T-cell (primary cell): ENCODE measurements at regions of chr6 and their contacts with region 1.

Region 1: DNA sequence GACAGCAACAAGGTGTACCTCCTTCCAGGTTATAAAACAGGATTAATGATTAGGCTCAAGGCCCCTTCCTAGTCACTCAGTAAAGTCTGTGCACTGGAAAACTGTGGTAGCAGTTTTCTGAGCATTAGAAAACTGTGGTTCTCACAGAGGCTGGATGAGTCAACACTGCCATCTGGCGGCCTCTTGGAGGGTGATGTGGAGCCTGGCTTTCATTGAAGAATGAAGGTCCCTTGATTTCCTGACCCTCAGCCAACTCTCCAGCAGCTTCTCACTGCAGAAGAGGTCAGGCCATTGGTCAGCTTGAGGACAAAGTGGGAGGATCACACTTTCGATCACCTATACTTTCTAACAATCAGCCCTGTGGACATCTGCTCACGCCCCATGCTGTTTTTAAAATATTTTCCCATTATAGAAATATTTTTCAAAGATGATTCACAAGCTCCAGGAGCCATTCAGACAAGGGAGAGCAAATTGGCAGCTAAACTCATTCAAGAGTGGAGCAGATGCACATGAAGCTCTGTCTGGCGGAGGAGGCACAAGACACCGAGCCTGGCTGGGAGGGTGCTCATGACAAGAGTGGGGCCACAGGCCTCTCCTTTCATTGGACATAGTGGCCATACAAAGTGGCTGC is 23.2 kb downstream of the PSMB1 start:
- DNase-seq: peak in 34 of 35 experiments; percentile 10 to 80 (median 58)
- ATAC-seq: peak; percentile 70 to 79 (median 74)
- H3K4me3 ChIP-seq: no peak overlapping the region
- H3K4me3 Mint-ChIP-seq: no peak overlapping the region
- H3K27ac ChIP-seq: no peak overlapping the region
- H3K27ac Mint-ChIP-seq: no peak overlapping the region
- H3K4me1 ChIP-seq: no peaks in the 10 kb centered on the region
- H3K4me1 Mint-ChIP-seq: peaks cover 0 to 2% (median 0%) of the 10 kb centered on the region in 3 donors
- H3K27me3 ChIP-seq: no peaks in the 10 kb centered on the region
- H3K27me3 Mint-ChIP-seq: peaks cover 0 to 4% of the 10 kb centered on the region in 2 donors

Region 2: DNA sequence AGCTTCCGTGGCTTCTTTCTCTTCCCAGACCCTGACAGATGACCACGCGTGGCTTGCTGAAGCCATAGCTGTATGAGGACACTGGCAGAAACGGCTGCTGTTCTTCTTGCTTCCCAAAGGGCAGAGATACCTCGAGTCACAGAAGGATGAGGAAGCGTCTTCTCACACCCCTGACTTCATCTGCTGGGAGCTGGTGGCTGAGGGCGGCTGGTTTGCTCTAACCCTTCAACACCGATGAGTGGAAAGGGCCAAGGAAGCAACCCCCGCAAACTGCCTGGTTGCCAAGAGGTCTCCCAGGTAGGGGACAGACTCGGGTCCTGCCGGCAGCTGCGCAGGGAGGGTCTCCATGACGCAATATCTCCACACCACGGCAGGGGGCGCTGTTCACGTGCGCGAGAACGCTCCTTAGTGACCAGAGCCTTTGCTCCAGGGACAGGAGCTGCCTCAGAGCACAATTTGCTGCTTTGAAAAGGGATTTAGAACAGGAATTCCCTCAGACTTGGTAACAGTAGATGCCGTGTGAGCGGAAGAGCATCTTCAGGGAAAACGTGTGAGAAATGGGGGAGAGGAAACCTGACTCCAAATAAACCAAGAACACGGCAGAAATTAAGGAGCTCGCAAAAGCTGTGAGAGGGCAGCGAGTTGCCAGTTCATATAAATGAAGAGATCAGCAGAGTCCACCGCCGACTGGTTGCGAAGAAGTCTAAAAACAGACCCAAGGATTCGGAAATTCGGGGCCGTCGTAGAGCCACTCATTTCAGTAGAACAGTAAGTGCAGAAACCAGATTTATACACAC is 698.3 kb before region 1 on chr6:
- CTCF ChIA-PET with region 1: interaction called, 7 to 10 read pairs
- POLR2A ChIA-PET with region 1: no interaction called
- DNase-seq: peak in 34 of 35 experiments; percentile 28 to 80 (median 56)
- ATAC-seq: peak; percentile 55 to 75 (median 60)
- H3K4me3 ChIP-seq: no peak overlapping the region
- H3K4me3 Mint-ChIP-seq: no peak overlapping the region
- H3K27ac ChIP-seq: no peak overlapping the region
- H3K27ac Mint-ChIP-seq: no peak overlapping the region
- H3K4me1 ChIP-seq: peaks cover 0 to 6% of the 10 kb centered on the region in 2 experiments
- H3K4me1 Mint-ChIP-seq: peaks cover 0 to 2% (median 0%) of the 10 kb centered on the region in 3 donors
- H3K27me3 ChIP-seq: peaks cover 0 to 36% of the 10 kb centered on the region in 2 experiments
- H3K27me3 Mint-ChIP-seq: peaks cover 33 to 54% of the 10 kb centered on the region in 2 donors

Region 3: DNA sequence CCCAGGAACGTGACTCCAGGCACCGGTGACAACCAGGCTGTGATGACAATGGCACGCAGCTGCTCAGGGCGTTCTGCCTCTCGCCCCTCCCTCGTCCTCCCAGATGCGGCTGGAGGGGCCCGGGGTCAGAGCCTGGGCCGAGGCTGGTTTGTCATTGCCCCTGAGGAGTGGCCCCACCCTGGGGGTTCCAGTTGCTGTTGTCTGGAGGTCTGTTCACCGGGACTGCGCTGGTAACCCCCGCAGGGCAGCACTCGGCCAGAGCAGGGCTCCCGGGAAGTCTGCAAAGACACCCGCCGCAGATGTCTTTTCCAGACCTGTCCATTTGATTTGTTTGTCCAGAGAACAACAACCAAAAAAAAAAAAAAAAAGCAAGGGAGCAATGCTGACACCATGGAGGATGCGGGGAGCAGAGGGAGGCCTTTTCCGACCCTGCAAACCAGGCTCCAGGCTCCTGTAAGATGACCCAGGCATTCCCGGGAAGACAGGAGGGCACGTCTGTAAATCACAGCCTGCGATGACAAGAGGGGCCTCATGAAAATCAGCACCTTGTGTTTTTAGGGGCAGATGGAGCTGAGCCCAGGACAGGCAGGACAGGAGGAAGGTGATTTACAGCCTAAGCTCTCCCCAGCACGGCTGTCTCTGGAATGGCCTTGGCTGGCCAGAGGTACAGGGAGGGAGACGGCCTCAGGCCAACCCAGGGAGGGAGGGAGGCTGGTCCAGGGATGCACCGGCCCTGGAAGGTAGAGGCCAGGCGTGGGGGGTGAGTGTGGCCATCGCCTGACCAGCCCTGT is 589.3 kb before region 1 on chr6:
- CTCF ChIA-PET with region 1: interaction called in 1 of 2 experiments, 11 read pairs
- POLR2A ChIA-PET with region 1: no interaction called
- DNase-seq: no peak
- ATAC-seq: no peak
- H3K4me3 ChIP-seq: no peak overlapping the region
- H3K4me3 Mint-ChIP-seq: no peak overlapping the region
- H3K27ac ChIP-seq: no peak overlapping the region
- H3K27ac Mint-ChIP-seq: no peak overlapping the region
- H3K4me1 ChIP-seq: no peaks in the 10 kb centered on the region
- H3K4me1 Mint-ChIP-seq: no peaks in the 10 kb centered on the region
- H3K27me3 ChIP-seq: peaks cover 0 to 45% of the 10 kb centered on the region in 2 experiments
- H3K27me3 Mint-ChIP-seq: peaks cover 20 to 37% of the 10 kb centered on the region in 2 donors

Region 4: GRCh38 chr6:170186006-170186958 is 343.7 kb before region 1 on chr6:
- CTCF ChIA-PET with region 1: no interaction called
- POLR2A ChIA-PET with region 1: no interaction called
- DNase-seq: no peak
- ATAC-seq: no peak
- H3K4me3 ChIP-seq: no peak overlapping the region
- H3K4me3 Mint-ChIP-seq: no peak overlapping the region
- H3K27ac ChIP-seq: no peak overlapping the region
- H3K27ac Mint-ChIP-seq: no peak overlapping the region
- H3K4me1 ChIP-seq: peaks cover 0 to 3% of the 10 kb centered on the region in 2 experiments
- H3K4me1 Mint-ChIP-seq: peaks cover 0 to 13% (median 9%) of the 10 kb centered on the region in 3 donors
- H3K27me3 ChIP-seq: peaks cover 0 to 34% of the 10 kb centered on the region in 2 experiments
- H3K27me3 Mint-ChIP-seq: peaks cover 4 to 10% of the 10 kb centered on the region in 2 donors

Region 5: DNA sequence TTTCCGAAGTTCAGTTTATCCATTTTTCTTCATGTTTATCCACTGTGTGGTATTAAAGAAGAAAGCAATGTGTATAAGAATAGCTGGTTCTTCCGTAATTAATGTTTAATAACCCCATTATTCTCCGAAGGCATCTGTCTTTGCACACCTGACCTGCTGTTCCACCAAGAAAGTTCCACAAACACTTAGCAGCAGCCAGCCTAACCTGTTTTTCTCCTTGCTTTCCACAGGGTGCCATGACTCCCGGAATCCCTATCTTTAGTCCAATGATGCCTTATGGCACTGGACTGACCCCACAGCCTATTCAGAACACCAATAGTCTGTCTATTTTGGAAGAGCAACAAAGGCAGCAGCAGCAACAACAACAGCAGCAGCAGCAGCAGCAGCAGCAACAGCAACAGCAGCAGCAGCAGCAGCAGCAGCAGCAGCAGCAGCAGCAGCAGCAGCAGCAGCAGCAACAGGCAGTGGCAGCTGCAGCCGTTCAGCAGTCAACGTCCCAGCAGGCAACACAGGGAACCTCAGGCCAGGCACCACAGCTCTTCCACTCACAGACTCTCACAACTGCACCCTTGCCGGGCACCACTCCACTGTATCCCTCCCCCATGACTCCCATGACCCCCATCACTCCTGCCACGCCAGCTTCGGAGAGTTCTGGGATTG is 31.7 kb after region 1 on chr6:
- CTCF ChIA-PET with region 1: no interaction called
- POLR2A ChIA-PET with region 1: no interaction called
- DNase-seq: no peak
- ATAC-seq: no peak
- H3K4me3 ChIP-seq: no peak overlapping the region
- H3K4me3 Mint-ChIP-seq: no peak overlapping the region
- H3K27ac ChIP-seq: no peak overlapping the region
- H3K27ac Mint-ChIP-seq: no peak overlapping the region
- H3K4me1 ChIP-seq: no peaks in the 10 kb centered on the region
- H3K4me1 Mint-ChIP-seq: peaks cover 39 to 53% (median 47%) of the 10 kb centered on the region in 3 donors
- H3K27me3 ChIP-seq: no peaks in the 10 kb centered on the region
- H3K27me3 Mint-ChIP-seq: no peaks in the 10 kb centered on the region